HepG2 (cell line): ENCODE measurements at regions of chr3 and their contacts with region 1.

Region 1: GRCh38 chr3:48548729-48549705 is 7.6 kb downstream of the PFKFB4 start:
- DNase-seq: peak; percentile 67
- ATAC-seq: peak; percentile 91
- H3K4me3 ChIP-seq: no peak overlapping the region
- H3K27ac ChIP-seq: no peak overlapping the region
- H3K4me1 ChIP-seq: peaks cover 65% of the 10 kb centered on the region
- H3K27me3 ChIP-seq: no peaks in the 10 kb centered on the region
- CTCF ChIP-seq: peak; percentile 93
- EP300 ChIP-seq: no peak
- POLR2A ChIP-seq: no peak
- RAD21 ChIP-seq: peak; percentile 83

Region 2: DNA sequence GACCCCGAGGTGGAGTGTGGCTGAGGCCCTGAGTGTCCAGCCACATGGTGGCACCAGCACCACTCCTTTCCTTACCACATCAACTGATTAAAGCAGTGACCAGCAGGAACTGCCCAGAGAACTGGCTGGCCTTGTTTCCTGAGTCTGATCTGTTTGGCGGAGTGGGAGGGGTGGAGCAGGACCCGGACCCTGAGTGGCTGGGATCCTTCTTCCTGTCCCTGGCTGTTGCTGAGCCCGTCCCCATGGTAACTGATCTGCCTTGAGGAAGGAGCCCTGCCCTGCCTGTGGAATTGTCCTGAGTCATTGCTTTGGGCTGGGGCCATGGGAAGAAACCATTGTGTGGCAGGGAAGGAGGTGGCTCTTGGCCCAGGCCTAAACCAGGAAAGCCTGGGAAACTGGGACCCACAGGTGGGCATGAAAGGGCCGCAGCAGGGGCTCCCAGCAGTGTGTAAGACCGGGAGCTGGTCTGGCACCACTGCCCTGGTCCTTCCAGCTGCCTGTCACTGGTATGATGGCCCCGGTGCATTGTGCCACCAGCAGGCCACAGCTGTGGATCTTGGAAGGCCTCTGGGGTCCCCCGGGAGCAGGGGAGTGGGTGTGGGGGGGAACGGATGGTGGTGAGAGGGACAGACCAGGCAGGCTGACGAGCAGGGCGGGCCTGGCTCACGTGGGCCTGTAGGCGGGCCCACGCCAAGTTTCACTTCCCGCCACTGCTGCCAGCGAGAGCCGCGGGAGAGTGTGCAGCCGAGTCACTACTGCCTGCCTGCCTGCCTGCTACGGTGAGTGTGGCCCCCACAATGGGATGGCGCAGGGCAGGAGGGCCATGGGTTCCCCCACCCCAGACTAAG is 83.3 kb before region 1 on chr3:
- CTCF ChIA-PET with region 1: interaction called, 17 read pairs
- POLR2A ChIA-PET with region 1: interaction called, 4 read pairs
- in situ Hi-C with region 1: no loop called
- intact Hi-C with region 1: loop called (anchors 1 kb)
- DNase-seq: peak; percentile 96
- ATAC-seq: peak; percentile 93
- H3K4me3 ChIP-seq: no peak overlapping the region
- H3K27ac ChIP-seq: peak overlapping the region; percentile 85
- H3K4me1 ChIP-seq: peaks cover 51% of the 10 kb centered on the region
- H3K27me3 ChIP-seq: no peaks in the 10 kb centered on the region
- CTCF ChIP-seq: peak; percentile 97
- EP300 ChIP-seq: peak in 1 of 2 experiments; percentile 23; a peak in 2 of 4 replicates
- POLR2A ChIP-seq: no peak
- RAD21 ChIP-seq: peak; percentile 98

Region 3: GRCh38 chr3:48569808-48570450 is 20.9 kb after region 1 on chr3:
- CTCF ChIA-PET with region 1: no interaction called
- POLR2A ChIA-PET with region 1: no interaction called
- in situ Hi-C with region 1: no loop called
- intact Hi-C with region 1: no loop called
- DNase-seq: no peak
- ATAC-seq: no peak
- H3K4me3 ChIP-seq: no peak overlapping the region
- H3K27ac ChIP-seq: no peak overlapping the region
- H3K4me1 ChIP-seq: peaks cover 91% of the 10 kb centered on the region
- H3K27me3 ChIP-seq: no peaks in the 10 kb centered on the region
- CTCF ChIP-seq: no peak
- EP300 ChIP-seq: no peak
- POLR2A ChIP-seq: no peak
- RAD21 ChIP-seq: no peak